ENCODE measurements at regions of chrX and their contacts with region 1.

Region 1: DNA sequence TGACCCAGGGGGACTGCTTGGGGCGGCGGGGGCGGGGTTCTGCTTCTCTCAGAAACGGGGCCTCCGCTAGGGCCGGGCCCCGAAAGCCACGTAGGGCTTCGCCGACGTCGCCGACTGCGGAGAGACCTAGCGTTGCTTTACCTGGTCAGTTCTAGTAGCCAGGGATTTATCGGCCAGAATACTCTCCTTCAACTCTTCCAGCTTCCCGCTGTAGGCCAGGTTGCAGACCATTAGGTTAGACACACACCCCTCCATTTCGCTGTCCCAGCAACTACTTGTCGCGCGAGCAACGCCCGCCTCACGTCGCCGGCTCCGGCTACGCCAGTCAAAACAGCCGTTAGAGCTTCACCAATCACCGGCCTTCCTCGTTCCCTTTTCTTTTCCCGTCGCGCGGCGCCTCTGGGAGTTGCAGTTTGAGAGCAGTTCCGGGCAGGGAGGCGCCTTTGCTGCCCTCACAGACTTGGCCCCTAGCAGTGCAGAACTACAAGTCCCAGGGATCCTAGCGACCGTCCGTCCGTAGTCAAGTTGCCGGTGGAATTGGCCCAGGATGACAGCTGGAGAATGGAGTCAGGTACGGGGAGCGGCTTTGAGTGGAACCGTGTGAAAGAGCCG is at the starts of genes ATG4A and PSMD10:
- DNase-seq: peak; percentile 94
- ATAC-seq: peak; percentile 96
- H3K4me3 Mint-ChIP-seq: no peak within 1 kb of the TSS
- H3K27ac Mint-ChIP-seq: no peak within 1 kb of the TSS
- H3K4me1 Mint-ChIP-seq: peaks cover 13% of the 10 kb centered on the region
- H3K27me3 Mint-ChIP-seq: no peaks in the 10 kb centered on the region
- total RNA-seq, gene ATG4A: 7.1 to 7.4 TPM
- total RNA-seq, gene PSMD10: 42.8 to 54.5 TPM

Region 2: GRCh38 chrX:106481341-106481740 is 1610.0 kb before region 1 on chrX:
- CTCF ChIA-PET with region 1: no interaction called
- POLR2A ChIA-PET with region 1: no interaction called
- intact Hi-C with region 1: loop called in 1 of 2 experiments (anchors 10 kb)
- DNase-seq: peak; percentile 36
- ATAC-seq: no peak
- H3K4me3 Mint-ChIP-seq: no peak overlapping the region
- H3K27ac Mint-ChIP-seq: no peak overlapping the region
- H3K4me1 Mint-ChIP-seq: peaks cover 24% of the 10 kb centered on the region
- H3K27me3 Mint-ChIP-seq: no peaks in the 10 kb centered on the region

Region 3: GRCh38 chrX:106999002-106999975 is 1092.1 kb before region 1 on chrX:
- CTCF ChIA-PET with region 1: no interaction called
- POLR2A ChIA-PET with region 1: no interaction called
- intact Hi-C with region 1: loop called in 1 of 2 experiments (anchors 5 kb)
- DNase-seq: peak; percentile 66
- ATAC-seq: peak; percentile 65
- H3K4me3 Mint-ChIP-seq: peak overlapping the region; percentile 80
- H3K27ac Mint-ChIP-seq: peak overlapping the region; percentile 78
- H3K4me1 Mint-ChIP-seq: peaks cover 3% of the 10 kb centered on the region
- H3K27me3 Mint-ChIP-seq: no peaks in the 10 kb centered on the region

Region 4: DNA sequence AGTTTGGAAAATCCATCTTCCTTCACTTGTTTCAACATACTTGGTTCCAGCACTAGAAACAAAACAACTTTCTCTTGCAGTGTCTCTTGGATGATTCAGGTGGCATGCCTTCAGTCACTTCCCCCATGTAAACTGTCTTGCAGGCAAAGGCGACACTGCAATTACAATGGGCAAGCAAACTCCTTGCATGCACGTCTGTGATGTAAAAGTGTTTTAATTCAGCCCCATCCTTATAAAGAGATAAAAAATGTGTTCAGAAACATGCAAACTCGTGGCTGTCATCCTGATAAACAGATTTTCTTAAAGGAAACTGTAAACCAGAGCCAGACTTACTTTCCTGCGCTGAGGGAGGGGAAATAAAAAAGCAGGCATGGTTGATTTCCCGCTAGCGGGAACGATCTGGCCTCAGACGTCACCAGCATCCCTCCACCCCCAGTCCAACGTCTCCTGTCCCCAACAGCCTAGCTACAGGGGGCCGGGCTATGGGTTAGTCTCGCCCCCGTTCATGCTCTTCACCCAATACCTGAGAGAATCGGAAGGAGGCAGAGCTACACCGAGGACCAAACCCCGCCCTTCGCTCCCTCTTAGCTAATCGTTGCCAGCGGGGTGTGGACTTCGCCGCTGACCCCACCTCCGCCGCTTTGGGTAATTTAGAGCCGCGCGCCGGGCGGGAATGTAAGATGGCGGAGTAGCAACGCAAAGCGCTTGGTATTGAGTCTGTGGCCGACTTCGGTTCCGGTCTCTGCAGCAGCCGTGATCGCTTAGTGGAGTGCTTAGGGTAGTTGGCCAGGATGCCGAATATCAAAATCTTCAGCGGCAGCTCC is 463.3 kb before region 1 on chrX and contains the start of gene PRPS1:
- CTCF ChIA-PET with region 1: no interaction called
- POLR2A ChIA-PET with region 1: interaction called, 11 read pairs
- intact Hi-C with region 1: loop called in 1 of 2 experiments (anchors 1 kb)
- DNase-seq: peak; percentile 93
- ATAC-seq: peak; percentile 99
- H3K4me3 Mint-ChIP-seq: peak within 1 kb of the TSS; percentile 89
- H3K27ac Mint-ChIP-seq: peak within 1 kb of the TSS; percentile 93
- H3K4me1 Mint-ChIP-seq: peaks cover 27% of the 10 kb centered on the region
- H3K27me3 Mint-ChIP-seq: no peaks in the 10 kb centered on the region
- total RNA-seq, gene PRPS1: 112 to 141 TPM

Region 5: GRCh38 chrX:107826238-107827029 is 264.9 kb before region 1 on chrX:
- CTCF ChIA-PET with region 1: no interaction called
- POLR2A ChIA-PET with region 1: no interaction called
- intact Hi-C with region 1: loop called in 1 of 2 experiments (anchors 5 kb)
- DNase-seq: peak; percentile 56
- ATAC-seq: peak; percentile 43
- H3K4me3 Mint-ChIP-seq: peak overlapping the region; percentile 75
- H3K27ac Mint-ChIP-seq: peak overlapping the region; percentile 78
- H3K4me1 Mint-ChIP-seq: peaks cover 46% of the 10 kb centered on the region
- H3K27me3 Mint-ChIP-seq: peaks cover 4% of the 10 kb centered on the region

Region 6: DNA sequence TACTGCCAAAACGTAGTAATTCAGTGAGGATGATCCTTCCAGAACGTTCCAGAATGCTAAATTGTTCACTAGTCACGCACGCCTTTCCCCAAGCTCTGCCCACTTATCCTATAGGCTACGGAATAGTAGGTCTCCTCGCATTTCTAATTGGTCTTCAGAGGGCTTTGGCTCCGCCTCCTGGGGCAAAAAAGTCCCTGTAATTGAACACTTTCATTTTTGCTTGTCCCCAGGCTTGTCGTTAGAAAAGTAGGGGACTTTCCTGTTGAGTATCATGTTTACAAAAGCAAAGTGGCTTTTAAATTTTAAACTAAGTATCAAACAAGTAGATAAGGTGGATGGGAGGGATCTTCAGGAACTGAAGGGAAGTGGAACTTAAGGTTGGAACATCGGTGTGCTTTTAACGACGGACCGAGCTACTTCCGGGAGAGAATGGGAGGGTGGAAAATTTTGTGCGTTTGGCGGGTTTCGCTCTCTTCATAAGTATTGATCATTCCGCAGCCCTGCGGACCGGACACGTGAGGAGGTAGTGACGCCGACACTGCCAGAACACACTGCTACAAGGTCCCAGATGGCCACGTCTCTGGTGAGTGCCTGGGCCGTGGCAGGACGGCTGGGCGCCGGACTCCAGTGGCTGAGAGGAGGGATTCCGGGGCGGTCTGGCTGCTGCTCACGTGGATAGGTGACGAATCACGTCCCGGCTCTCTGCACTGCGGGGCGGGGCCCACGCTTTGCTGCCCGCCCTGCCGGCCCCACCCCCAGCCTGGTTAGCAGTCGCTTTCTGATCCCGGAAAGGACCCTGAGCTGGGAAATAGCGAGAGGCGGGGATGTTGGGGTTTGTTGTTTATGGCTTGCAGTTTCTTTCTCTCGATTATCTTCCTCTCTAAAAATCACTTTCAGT is 1445.3 kb after region 1 on chrX and contains the start of gene NXT2:
- CTCF ChIA-PET with region 1: no interaction called
- POLR2A ChIA-PET with region 1: no interaction called
- intact Hi-C with region 1: loop called (anchors 2 to 10 kb)
- DNase-seq: peak; percentile 91
- ATAC-seq: peak; percentile 98
- H3K4me3 Mint-ChIP-seq: peak within 1 kb of the TSS; percentile 89
- H3K27ac Mint-ChIP-seq: peak within 1 kb of the TSS; percentile 99
- H3K4me1 Mint-ChIP-seq: peaks cover 14% of the 10 kb centered on the region
- H3K27me3 Mint-ChIP-seq: peaks cover 5% of the 10 kb centered on the region
- total RNA-seq, gene NXT2: 10.9 to 11.6 TPM